Naive thymus-derived CD4-positive, alpha-beta T cell (primary cell): ENCODE measurements at regions of chr4 and their contacts with region 1.

Region 1: DNA sequence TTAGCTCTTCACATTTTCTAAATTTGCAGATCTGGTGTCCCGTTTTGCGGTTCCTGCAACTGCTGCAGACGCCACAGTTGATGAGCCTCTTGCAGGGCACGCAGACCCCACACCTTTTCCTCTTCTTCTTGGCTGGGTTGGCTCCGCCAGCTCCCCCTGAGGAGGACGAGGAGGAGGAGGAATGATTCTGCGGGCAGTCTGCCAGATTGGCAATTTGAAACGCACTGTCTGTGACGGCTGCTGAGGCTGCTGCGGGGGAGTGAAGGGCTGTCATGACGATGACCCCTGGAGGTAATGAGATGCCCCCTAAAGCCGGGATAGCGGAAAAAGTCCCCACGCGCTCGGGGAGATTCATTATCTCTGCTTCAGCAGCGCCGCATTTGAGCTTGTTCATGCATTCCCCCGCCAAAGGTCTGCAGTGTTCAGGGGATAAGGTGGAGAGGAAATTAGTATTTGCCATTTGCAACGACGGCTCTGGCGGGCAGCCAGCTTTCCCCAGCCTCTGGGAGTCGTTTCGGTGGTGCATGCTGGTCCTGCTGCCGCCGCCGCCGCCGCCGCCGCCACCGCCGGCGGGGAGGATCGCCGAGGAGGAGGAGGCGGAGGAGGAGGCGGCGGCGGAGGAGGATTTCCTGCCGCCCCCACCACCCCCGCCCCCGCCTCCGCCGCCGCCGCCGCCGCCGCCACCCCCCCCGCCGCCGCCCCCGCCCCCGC is 3.8 kb downstream of the CXXC4 start:
- DNase-seq: peak in 8 of 9 donors; percentile 8 to 42 (median 20)
- ATAC-seq: peak; percentile 65
- H3K4me3 ChIP-seq: peak overlapping the region; percentile 63
- H3K4me3 Mint-ChIP-seq: peak overlapping the region; percentile 71 to 86 (median 82)
- H3K27ac ChIP-seq: no peak overlapping the region
- H3K27ac Mint-ChIP-seq: peak overlapping the region in 1 of 9 donors; percentile 92
- H3K4me1 ChIP-seq: peaks cover 0 to 13% of the 10 kb centered on the region in 2 donors
- H3K4me1 Mint-ChIP-seq: peaks cover 14 to 55% (median 35%) of the 10 kb centered on the region in 7 donors
- H3K27me3 ChIP-seq: peaks cover 0 to 20% of the 10 kb centered on the region in 2 donors
- H3K27me3 Mint-ChIP-seq: peaks cover 64 to 81% (median 77%) of the 10 kb centered on the region in 5 donors

Region 2: DNA sequence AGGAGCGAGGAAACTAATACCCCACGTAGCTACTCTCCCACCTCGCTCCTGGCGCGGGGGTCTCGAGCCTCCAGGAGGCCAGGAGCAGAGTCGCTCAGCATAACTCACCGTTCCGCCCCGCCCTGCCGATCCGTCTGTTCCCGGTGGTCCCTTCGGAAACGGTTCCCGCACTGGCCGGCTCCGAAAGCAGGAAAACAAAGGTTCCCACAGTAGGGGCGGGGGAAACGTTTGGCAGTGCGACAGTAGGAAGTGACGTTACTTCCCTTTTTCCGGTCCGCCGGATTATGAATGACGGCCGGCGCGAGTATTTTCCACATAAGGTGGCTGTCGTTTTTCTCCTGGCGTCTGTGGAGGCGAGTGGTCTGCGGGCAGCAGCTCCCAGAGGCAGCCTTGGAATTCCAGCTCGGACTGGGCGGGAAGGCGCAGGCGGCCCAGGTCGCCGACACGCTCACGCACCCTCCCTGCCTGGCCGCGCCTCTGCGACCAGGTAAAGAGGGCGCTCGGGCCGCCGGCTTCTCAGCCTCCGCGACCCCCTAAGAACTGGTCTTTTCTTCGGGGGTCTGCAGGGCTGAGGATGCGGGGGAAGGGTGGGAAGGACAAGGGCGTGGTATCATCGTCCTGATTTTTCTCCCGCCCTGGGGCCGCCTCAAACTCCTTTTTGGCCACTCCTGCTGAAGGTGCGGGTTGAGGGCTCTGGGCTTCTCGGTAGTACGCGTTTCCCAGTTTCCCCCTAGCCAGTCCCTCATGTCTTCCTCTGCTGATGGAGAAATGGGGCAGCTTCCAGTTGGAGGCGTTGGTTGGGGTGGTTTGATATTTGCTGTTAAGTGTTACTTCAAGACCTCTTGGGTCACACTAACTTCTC is 1217.8 kb after region 1 on chr4 and contains the starts of genes GSTCD and INTS12:
- CTCF ChIA-PET with region 1: no interaction called
- POLR2A ChIA-PET with region 1: no interaction called
- intact Hi-C with region 1: loop called in 1 of 2 experiments (anchors 10 kb)
- DNase-seq: peak; percentile 73 to 88 (median 84)
- ATAC-seq: peak; percentile 98
- H3K4me3 ChIP-seq: peak within 1 kb of the TSS; percentile 92
- H3K4me3 Mint-ChIP-seq: peak within 1 kb of the TSS; percentile 94 to 100 (median 99)
- H3K27ac ChIP-seq: peak within 1 kb of the TSS; percentile 84
- H3K27ac Mint-ChIP-seq: peak within 1 kb of the TSS; percentile 92 to 100 (median 97)
- H3K4me1 ChIP-seq: peaks cover 7 to 10% of the 10 kb centered on the region in 2 donors
- H3K4me1 Mint-ChIP-seq: peaks cover 10 to 40% (median 27%) of the 10 kb centered on the region in 7 donors
- H3K27me3 ChIP-seq: no peaks in the 10 kb centered on the region
- H3K27me3 Mint-ChIP-seq: no peaks in the 10 kb centered on the region
- total RNA-seq, gene GSTCD: 5.8 to 9.2 (median 7.5) TPM
- total RNA-seq, gene INTS12: 14.8 to 20.4 (median 17.6) TPM